ENCODE measurements at regions of chr17 and their contacts with region 1.

Region 1: GRCh38 chr17:55416470-55417052 is 5.1 kb downstream of the MMD start:
- DNase-seq: no peak
- H3K4me3 ChIP-seq: no peak overlapping the region
- H3K4me1 ChIP-seq: peaks cover 8% of the 10 kb centered on the region
- H3K27me3 ChIP-seq: no peaks in the 10 kb centered on the region

Region 2: GRCh38 chr17:55273579-55274354 is 142.8 kb before region 1 on chr17:
- in situ Hi-C with region 1: no loop called
- DNase-seq: no peak
- H3K4me3 ChIP-seq: no peak overlapping the region
- H3K4me1 ChIP-seq: no peaks in the 10 kb centered on the region
- H3K27me3 ChIP-seq: no peaks in the 10 kb centered on the region

Region 3: DNA sequence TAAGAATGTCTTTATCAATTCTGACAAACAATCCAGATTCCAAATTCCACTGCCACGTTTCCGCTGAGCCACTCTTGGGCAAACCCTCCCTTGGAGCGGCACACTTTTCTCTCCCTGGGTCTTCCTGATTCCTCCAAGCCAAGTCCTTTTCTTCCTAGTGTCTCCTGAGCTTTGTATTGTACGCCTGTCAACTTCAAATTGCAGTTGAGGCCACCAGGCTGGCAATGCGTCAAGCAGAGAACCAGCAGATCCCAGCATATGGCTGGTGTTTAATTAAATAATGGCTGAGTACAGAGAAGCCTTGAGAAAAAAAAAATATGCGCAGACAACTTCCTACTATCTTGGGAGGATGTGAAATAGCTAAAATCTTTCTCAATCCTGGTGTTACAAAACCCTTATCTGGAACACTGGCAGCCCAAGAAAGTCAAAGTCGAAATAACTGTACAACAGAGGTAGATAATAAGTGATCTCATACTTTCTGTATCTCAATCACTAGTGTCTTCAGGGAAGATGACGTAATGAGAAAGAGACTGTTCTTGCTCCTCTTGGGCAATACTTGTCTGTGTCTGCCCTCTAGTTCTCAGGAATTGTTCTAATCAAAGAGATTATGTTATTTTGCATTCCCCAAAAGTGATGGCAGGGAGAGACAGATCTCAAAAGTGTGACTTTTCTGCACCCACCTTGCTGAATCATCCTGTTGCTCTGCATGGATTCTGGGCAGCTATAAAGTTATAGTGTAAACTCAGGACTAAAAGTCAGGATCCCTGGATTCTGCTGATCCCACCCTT is 79.7 kb after region 1 on chr17:
- in situ Hi-C with region 1: loop called (anchors 10 kb)
- DNase-seq: no peak
- H3K4me3 ChIP-seq: no peak overlapping the region
- H3K4me1 ChIP-seq: peaks cover 4% of the 10 kb centered on the region; the same call in 1 of the 2 replicates
- H3K27me3 ChIP-seq: no peaks in the 10 kb centered on the region